ENCODE measurements at regions of chr7 and their contacts with region 1.

Region 1: DNA sequence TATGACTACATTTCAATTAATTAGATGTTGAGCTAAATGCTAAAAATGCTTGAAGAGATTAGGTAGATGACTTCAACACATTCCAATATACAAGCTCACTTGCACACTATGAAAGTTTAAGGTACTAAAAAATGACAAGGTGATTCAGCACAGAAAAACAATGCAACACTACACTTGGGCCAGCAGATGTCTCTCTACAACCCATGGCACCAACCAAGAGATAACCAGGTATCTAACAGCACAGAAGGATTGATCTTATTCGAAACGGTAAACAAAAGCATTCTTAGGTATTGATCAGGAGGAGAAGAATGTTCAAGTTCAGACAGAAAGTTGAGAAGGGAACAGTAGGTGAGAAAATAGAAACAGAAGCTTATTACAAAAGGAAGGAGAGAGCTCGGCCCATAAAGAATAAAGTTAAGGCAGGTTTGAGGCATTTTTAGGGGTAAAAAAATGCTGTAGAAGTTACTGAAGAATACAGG is 248.2 kb upstream of the KLF14 start:
- DNase-seq: peak in 3 of 9 experiments; percentile 24 to 77 (median 67)
- ATAC-seq: peak; percentile 67
- H3K4me3 ChIP-seq: no peak overlapping the region
- H3K4me3 Mint-ChIP-seq: no peak overlapping the region
- H3K27ac ChIP-seq: peak overlapping the region; percentile 13 to 62
- H3K27ac Mint-ChIP-seq: no peak overlapping the region
- H3K4me1 ChIP-seq: peaks cover 59% of the 10 kb centered on the region
- H3K4me1 Mint-ChIP-seq: peaks cover 17% of the 10 kb centered on the region
- H3K27me3 ChIP-seq: no peaks in the 10 kb centered on the region
- H3K27me3 Mint-ChIP-seq: no peaks in the 10 kb centered on the region
- CTCF ChIP-seq: peak; percentile 82

Region 2: GRCh38 chr7:130135208-130136205 is 846.7 kb before region 1 on chr7:
- CTCF ChIA-PET with region 1: no interaction called
- POLR2A ChIA-PET with region 1: no interaction called
- intact Hi-C with region 1: no loop called
- DNase-seq: no peak
- ATAC-seq: no peak
- H3K4me3 ChIP-seq: no peak overlapping the region
- H3K4me3 Mint-ChIP-seq: no peak overlapping the region
- H3K27ac ChIP-seq: no peak overlapping the region
- H3K27ac Mint-ChIP-seq: no peak overlapping the region
- H3K4me1 ChIP-seq: no peaks in the 10 kb centered on the region
- H3K4me1 Mint-ChIP-seq: peaks cover 16% of the 10 kb centered on the region
- H3K27me3 ChIP-seq: no peaks in the 10 kb centered on the region
- H3K27me3 Mint-ChIP-seq: no peaks in the 10 kb centered on the region
- CTCF ChIP-seq: no peak

Region 3: GRCh38 chr7:130970696-130971095 is 11.5 kb before region 1 on chr7:
- CTCF ChIA-PET with region 1: interaction called, 10 read pairs
- POLR2A ChIA-PET with region 1: interaction called, 5 read pairs
- intact Hi-C with region 1: no loop called
- DNase-seq: peak in 1 of 9 experiments; percentile 27
- ATAC-seq: no peak
- H3K4me3 ChIP-seq: no peak overlapping the region
- H3K4me3 Mint-ChIP-seq: no peak overlapping the region
- H3K27ac ChIP-seq: peak overlapping the region in 1 of 2 experiments; percentile 17
- H3K27ac Mint-ChIP-seq: no peak overlapping the region
- H3K4me1 ChIP-seq: peaks cover 12% of the 10 kb centered on the region
- H3K4me1 Mint-ChIP-seq: peaks cover 70% of the 10 kb centered on the region
- H3K27me3 ChIP-seq: no peaks in the 10 kb centered on the region
- H3K27me3 Mint-ChIP-seq: no peaks in the 10 kb centered on the region
- CTCF ChIP-seq: no peak

Region 4: GRCh38 chr7:131007394-131008330 is 25.5 kb after region 1 on chr7:
- CTCF ChIA-PET with region 1: interaction called, 28 read pairs
- POLR2A ChIA-PET with region 1: no interaction called
- intact Hi-C with region 1: loop called in 1 of 2 experiments (anchors 2 kb)
- DNase-seq: peak in 7 of 9 experiments; percentile 30 to 83 (median 51)
- ATAC-seq: peak; percentile 39
- H3K4me3 ChIP-seq: no peak overlapping the region
- H3K4me3 Mint-ChIP-seq: peak overlapping the region; percentile 53
- H3K27ac ChIP-seq: peak overlapping the region; percentile 3 to 73
- H3K27ac Mint-ChIP-seq: peak overlapping the region; percentile 60
- H3K4me1 ChIP-seq: peaks cover 62% of the 10 kb centered on the region
- H3K4me1 Mint-ChIP-seq: peaks cover 85% of the 10 kb centered on the region
- H3K27me3 ChIP-seq: no peaks in the 10 kb centered on the region
- H3K27me3 Mint-ChIP-seq: no peaks in the 10 kb centered on the region
- CTCF ChIP-seq: peak; percentile 50

Region 5: DNA sequence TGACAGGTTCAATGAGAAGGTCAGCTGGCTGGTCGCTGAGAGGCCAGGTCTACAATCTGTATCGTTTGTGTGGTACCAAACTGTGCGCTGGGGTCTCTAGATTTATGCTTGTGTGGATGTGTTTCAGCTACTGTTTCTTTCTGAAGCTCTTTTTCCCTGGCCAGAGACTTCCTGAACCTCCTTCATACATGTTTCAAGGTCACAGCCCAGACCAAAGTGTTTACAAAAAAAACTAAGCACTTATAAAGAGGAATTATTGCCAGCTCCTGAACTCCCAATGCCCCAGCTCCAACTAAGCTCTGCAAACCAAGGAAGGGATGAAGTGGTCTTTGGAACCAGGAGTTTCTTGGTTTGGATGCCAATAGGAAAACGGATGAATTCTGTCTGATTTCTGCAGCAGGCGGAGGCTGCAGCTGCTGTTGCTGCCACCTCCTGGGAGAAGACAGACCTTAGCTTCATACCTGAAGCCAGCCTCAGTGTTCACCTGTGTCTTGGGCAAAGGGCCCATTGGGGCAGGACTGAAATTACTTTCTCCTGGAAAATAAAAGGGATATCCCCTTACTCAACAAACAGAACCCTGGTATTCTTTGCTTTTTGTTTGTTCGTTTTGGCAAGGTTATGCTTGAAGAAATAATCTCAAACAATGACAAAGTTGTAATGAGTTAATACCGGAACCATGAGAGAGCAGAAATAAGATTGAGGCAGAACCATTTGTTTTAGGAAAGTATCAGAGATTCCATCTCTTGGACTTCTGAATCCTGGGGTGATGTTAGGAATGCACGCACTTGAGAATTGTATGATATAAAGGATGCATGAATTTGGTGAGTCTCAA is 320.9 kb after region 1 on chr7:
- CTCF ChIA-PET with region 1: interaction called, 4 read pairs
- POLR2A ChIA-PET with region 1: no interaction called
- intact Hi-C with region 1: loop called in 1 of 2 experiments (anchors 1 kb)
- DNase-seq: peak in 7 of 9 experiments; percentile 19 to 60 (median 38)
- ATAC-seq: peak; percentile 56
- H3K4me3 ChIP-seq: no peak overlapping the region
- H3K4me3 Mint-ChIP-seq: no peak overlapping the region
- H3K27ac ChIP-seq: no peak overlapping the region
- H3K27ac Mint-ChIP-seq: no peak overlapping the region
- H3K4me1 ChIP-seq: no peaks in the 10 kb centered on the region
- H3K4me1 Mint-ChIP-seq: no peaks in the 10 kb centered on the region
- H3K27me3 ChIP-seq: no peaks in the 10 kb centered on the region
- H3K27me3 Mint-ChIP-seq: no peaks in the 10 kb centered on the region
- CTCF ChIP-seq: peak; percentile 50

Region 6: GRCh38 chr7:131513245-131514061 is 531.3 kb after region 1 on chr7:
- CTCF ChIA-PET with region 1: interaction called, 4 read pairs
- POLR2A ChIA-PET with region 1: no interaction called
- intact Hi-C with region 1: loop called (anchors 5 to 10 kb)
- DNase-seq: peak; percentile 42 to 82 (median 77)
- ATAC-seq: peak; percentile 100
- H3K4me3 ChIP-seq: no peak overlapping the region
- H3K4me3 Mint-ChIP-seq: no peak overlapping the region
- H3K27ac ChIP-seq: no peak overlapping the region
- H3K27ac Mint-ChIP-seq: no peak overlapping the region
- H3K4me1 ChIP-seq: peaks cover 9% of the 10 kb centered on the region
- H3K4me1 Mint-ChIP-seq: peaks cover 20% of the 10 kb centered on the region
- H3K27me3 ChIP-seq: no peaks in the 10 kb centered on the region
- H3K27me3 Mint-ChIP-seq: peaks cover 9% of the 10 kb centered on the region
- CTCF ChIP-seq: peak; percentile 74